ENCODE measurements at regions of chr5 and their contacts with region 1.

Region 1: GRCh38 chr5:17189381-17190036 is 27.9 kb upstream of the BASP1 start:
- DNase-seq: peak; percentile 52
- H3K4me3 ChIP-seq: no peak overlapping the region
- H3K27ac ChIP-seq: no peak overlapping the region
- H3K4me1 ChIP-seq: peaks cover 40% of the 10 kb centered on the region
- H3K27me3 ChIP-seq: no peaks in the 10 kb centered on the region
- CTCF ChIP-seq: peak; percentile 76 to 79

Region 2: DNA sequence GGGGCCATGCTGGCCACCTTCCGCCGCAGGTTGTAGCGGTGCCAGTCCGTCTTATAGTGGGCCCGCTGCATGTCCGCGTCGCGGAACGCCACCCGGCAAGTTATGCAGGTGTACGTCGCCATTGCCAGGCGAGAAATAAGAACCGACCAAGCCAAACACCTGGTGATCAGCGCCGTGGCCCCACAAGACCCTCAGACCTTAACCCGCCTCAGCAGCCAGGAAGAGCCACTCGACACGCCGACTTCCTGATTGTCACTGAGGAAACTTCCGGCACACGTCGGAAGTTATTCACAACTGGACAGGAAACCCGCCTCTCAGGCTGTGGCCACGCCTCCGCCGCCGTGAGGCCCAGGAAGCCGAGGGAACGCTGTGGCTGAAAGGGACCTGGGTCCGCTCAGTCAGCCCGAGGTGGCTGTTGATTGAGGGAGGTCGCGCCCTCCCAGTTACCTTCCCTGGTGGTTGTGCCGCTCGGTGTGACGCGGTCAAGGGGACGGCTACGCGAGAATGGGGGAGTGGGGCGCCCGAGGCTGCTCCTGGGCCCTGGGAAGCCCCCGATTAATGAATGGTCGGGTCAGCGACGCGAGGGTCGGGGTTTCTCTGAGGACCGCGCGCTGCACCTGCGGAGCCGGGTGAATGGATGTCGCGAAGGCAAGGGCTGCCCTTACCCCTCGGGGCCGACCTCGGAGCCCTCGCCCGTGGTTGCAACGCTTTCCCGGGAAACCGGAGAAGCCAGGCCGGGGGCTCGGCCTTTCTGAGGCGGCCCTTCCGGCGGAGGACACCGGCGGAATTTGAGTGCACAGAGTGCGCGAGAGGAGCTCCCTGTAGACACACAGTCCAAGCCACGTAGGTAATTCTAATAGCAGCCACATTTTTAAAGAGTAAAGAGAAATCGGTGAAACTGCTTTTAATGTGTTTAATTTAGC is 723.7 kb before region 1 on chr5 and contains the start of gene ZNF622:
- CTCF ChIA-PET with region 1: no interaction called
- dilution Hi-C with region 1: no loop called
- in situ Hi-C with region 1: loop called in 1 of 2 experiments (anchors 25 kb)
- intact Hi-C with region 1: no loop called
- DNase-seq: peak; percentile 89
- H3K4me3 ChIP-seq: peak within 1 kb of the TSS; percentile 78 to 98 (median 87)
- H3K27ac ChIP-seq: peak within 1 kb of the TSS; percentile 83
- H3K4me1 ChIP-seq: peaks cover 33% of the 10 kb centered on the region
- H3K27me3 ChIP-seq: no peaks in the 10 kb centered on the region
- CTCF ChIP-seq: no peak
- total RNA-seq, gene ZNF622: 32.2 to 32.3 TPM

Region 3: GRCh38 chr5:16552666-16553343 is 636.7 kb before region 1 on chr5:
- CTCF ChIA-PET with region 1: no interaction called
- dilution Hi-C with region 1: no loop called
- in situ Hi-C with region 1: no loop called
- intact Hi-C with region 1: loop called (anchors 5 kb)
- DNase-seq: peak; percentile 62
- H3K4me3 ChIP-seq: no peak overlapping the region
- H3K27ac ChIP-seq: no peak overlapping the region
- H3K4me1 ChIP-seq: no peaks in the 10 kb centered on the region
- H3K27me3 ChIP-seq: no peaks in the 10 kb centered on the region
- CTCF ChIP-seq: peak; percentile 91 to 97

Region 4: GRCh38 chr5:16791036-16791705 is 398.3 kb before region 1 on chr5:
- CTCF ChIA-PET with region 1: interaction called, 10 read pairs
- dilution Hi-C with region 1: loop called (anchors 5 kb)
- in situ Hi-C with region 1: loop called (anchors 5 to 10 kb)
- intact Hi-C with region 1: loop called (anchors 1 kb)
- DNase-seq: peak; percentile 27
- H3K4me3 ChIP-seq: no peak overlapping the region
- H3K27ac ChIP-seq: no peak overlapping the region
- H3K4me1 ChIP-seq: peaks cover 3% of the 10 kb centered on the region
- H3K27me3 ChIP-seq: no peaks in the 10 kb centered on the region
- CTCF ChIP-seq: peak; percentile 44 to 61

Region 5: GRCh38 chr5:16844948-16845347 is 344.6 kb before region 1 on chr5:
- CTCF ChIA-PET with region 1: interaction called, 3 read pairs
- dilution Hi-C with region 1: no loop called
- in situ Hi-C with region 1: no loop called
- intact Hi-C with region 1: loop called (anchors 2 kb)
- DNase-seq: no peak
- H3K4me3 ChIP-seq: no peak overlapping the region
- H3K27ac ChIP-seq: no peak overlapping the region
- H3K4me1 ChIP-seq: peaks cover 7% of the 10 kb centered on the region
- H3K27me3 ChIP-seq: no peaks in the 10 kb centered on the region
- CTCF ChIP-seq: peak in 1 of 2 donors; percentile 19

Region 6: DNA sequence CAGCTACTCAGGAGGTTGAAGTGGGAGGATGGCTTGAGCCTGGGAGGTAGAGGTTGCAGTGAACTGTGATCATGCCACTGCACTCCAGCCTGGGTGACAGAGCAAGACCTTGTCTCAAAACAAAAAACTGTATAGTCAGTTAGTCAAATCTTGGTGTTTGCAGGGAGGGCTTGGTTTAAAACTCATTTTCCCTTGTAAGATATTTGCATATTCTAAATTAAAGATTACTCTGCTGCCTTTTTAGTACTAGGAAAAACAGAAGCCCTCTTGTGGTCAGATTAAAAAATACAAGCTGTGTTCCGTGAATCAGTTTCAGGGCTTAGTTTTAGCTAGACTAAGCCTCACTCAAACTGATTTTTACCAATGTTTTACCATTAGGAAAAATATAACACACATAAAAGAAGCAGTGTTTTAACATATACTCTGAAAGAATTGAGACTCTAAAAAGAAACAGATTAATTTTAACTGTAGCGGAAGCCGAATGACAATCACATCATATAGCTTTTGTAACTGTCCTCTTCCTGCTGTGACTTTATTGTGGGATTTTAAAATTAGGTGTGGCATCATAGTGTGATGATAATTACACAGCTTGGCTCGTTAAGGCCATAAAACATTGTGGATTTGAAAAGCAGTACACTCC is 56.9 kb before region 1 on chr5:
- CTCF ChIA-PET with region 1: interaction called, 3 read pairs
- dilution Hi-C with region 1: no loop called
- in situ Hi-C with region 1: no loop called
- intact Hi-C with region 1: loop called (anchors 1 kb)
- DNase-seq: no peak
- H3K4me3 ChIP-seq: no peak overlapping the region
- H3K27ac ChIP-seq: no peak overlapping the region
- H3K4me1 ChIP-seq: peaks cover 9% of the 10 kb centered on the region
- H3K27me3 ChIP-seq: no peaks in the 10 kb centered on the region
- CTCF ChIP-seq: peak; percentile 61 to 64

Region 7: DNA sequence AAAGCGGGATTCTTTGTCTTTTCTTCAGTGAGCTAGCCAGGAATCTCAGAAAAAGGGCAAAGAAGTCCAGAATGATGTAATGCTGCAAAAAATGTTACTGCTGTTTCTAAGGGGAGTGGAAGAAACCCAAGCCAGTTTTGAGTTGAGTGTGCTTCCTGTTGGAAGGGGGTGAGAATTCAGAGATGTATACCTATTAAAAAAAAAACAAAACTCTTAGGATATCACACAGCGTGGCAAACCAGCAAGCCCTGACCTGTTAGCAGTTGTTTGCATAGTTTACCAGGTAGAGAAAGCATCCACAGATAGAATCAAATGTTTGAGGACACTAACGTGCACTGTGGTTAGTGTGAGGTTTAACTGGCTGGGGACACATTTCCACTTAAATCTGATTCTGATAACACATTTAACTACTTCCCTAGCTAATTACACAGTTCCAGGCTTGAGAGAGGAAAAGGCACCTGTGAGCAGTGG is 39.3 kb after region 1 on chr5:
- CTCF ChIA-PET with region 1: no interaction called
- dilution Hi-C with region 1: no loop called
- in situ Hi-C with region 1: no loop called
- intact Hi-C with region 1: no loop called
- DNase-seq: peak; percentile 86
- H3K4me3 ChIP-seq: no peak overlapping the region
- H3K27ac ChIP-seq: peak overlapping the region; percentile 46
- H3K4me1 ChIP-seq: peaks cover 23% of the 10 kb centered on the region
- H3K27me3 ChIP-seq: no peaks in the 10 kb centered on the region
- CTCF ChIP-seq: no peak

Region 8: DNA sequence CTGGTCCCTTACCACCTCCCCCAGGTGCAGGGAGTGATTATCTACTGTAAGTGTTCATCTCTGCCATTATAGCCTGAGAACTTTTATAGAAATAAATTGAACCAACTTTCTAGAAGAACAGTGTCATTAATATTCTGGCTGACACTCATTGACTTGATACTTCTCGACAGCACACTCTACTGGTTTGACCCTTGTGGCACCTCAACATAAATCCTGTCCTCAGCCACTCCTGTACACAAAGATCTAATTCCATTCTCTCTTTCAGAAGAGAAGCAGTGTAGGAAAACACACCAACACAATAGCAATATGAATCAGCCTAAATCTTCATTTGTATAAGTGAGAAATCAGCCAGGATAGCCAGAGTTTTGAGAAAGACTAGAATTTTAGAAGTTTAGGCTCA is 862.4 kb after region 1 on chr5:
- CTCF ChIA-PET with region 1: no interaction called
- dilution Hi-C with region 1: no loop called
- in situ Hi-C with region 1: no loop called
- intact Hi-C with region 1: no loop called
- DNase-seq: no peak
- H3K4me3 ChIP-seq: no peak overlapping the region
- H3K27ac ChIP-seq: no peak overlapping the region
- H3K4me1 ChIP-seq: no peaks in the 10 kb centered on the region
- H3K27me3 ChIP-seq: no peaks in the 10 kb centered on the region
- CTCF ChIP-seq: peak in 1 of 2 donors; percentile 9

Measured in mammary epithelial cell (primary cell).